MCF 10A (cell line): ENCODE measurements at regions of chr15 and their contacts with region 1.

Region 1: DNA sequence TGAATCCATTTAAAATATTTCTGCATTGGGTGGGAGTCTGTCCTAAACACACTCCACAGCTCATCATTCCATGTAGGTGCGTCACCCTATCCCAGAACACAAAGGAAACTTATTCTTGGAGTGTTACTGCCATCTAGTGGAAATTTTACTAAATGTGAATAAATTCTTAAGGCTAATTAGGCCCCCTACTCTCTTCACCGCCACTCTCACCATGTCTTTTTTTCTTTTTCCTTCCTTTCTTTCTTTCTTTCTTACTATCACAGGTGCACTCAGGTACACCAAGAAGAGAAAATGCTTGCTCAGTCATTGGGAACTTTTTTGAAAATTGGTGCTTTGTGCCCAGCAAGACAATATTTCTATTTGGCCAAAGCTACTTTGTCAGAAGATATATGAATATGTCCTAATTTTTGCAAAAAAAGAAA is 26.4 kb upstream of the ATP8B4 start:
- DNase-seq: peak; percentile 75
- H3K4me3 Mint-ChIP-seq: no peak overlapping the region
- H3K27ac Mint-ChIP-seq: no peak overlapping the region
- H3K4me1 Mint-ChIP-seq: peaks cover 12% of the 10 kb centered on the region
- H3K27me3 Mint-ChIP-seq: no peaks in the 10 kb centered on the region
- CTCF ChIP-seq: peak; percentile 49

Region 2: DNA sequence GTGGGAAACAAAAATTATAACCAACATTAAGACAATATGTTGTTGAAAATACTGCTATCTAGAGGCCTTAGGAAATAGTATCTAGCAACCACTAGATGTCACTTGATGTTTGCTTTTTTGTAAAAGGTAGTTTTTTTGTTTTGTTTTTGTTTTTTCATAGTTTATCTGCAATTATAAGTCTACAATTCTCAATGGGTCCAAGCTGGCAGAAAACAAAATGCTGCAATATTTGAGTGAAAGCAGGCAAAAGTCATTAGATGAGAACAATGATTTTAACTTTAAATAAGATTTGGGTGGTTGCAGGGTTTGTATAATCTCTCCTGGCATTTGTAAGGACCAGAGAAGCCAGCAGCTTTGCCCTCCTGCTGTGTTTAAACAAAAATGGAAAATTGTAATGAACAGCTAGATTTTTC is 1787.2 kb before region 1 on chr15:
- CTCF ChIA-PET with region 1: interaction called, 4 read pairs
- POLR2A ChIA-PET with region 1: no interaction called
- intact Hi-C with region 1: loop called (anchors 2 kb)
- DNase-seq: peak; percentile 34
- H3K4me3 Mint-ChIP-seq: no peak overlapping the region
- H3K27ac Mint-ChIP-seq: no peak overlapping the region
- H3K4me1 Mint-ChIP-seq: peaks cover 19% of the 10 kb centered on the region
- H3K27me3 Mint-ChIP-seq: no peaks in the 10 kb centered on the region
- CTCF ChIP-seq: peak; percentile 75

Region 3: DNA sequence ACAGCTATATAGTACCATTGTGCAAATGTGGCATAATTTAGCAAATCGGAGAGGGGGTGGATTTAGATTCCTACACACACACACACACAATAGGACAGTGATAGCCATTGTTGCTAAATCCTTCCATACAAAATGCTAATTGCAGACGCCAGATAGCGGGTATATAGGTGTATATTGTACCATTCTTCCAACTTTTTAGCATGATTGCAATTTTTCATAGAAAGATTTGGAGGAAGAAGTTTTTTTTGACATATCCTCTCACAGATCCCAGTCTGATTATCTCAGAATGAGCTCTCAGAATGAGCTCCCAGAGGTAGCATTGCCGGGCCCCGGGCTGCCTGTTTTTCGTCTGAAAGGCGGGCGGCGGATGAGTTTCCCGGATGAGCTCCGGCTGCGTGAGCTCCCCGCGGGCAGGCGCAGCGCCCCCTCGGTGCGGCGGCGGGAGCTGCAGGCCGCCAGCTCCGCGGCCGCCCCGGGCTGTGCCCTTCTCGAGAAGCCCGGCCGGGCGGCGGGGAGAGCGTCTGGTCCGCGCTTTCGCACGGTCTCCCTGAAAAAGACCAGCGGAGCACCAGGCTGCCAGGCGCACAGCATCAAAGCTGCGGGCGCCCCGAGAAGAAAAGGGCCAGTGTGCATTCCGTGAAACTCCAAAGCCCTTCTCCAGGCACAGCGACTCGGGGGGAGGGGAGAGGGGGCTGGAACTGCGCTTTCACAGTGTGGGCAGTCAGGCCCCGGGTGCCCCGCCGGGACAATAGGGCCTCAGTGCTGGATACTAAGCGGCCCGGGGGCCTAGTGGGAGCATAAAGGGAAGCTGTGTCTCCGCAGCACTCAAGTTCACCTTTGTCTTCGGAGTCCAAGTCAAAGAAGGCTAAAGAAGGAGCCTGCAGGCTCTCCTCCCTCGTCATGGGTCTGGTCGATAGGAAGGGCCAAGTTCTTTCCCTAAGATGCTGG is 1169.7 kb before region 1 on chr15:
- CTCF ChIA-PET with region 1: interaction called, 11 read pairs
- POLR2A ChIA-PET with region 1: no interaction called
- intact Hi-C with region 1: no loop called
- DNase-seq: peak; percentile 74
- H3K4me3 Mint-ChIP-seq: peak overlapping the region; percentile 45
- H3K27ac Mint-ChIP-seq: no peak overlapping the region
- H3K4me1 Mint-ChIP-seq: peaks cover 10% of the 10 kb centered on the region
- H3K27me3 Mint-ChIP-seq: no peaks in the 10 kb centered on the region
- CTCF ChIP-seq: peak; percentile 91

Region 4: GRCh38 chr15:49901996-49902684 is 243.3 kb before region 1 on chr15:
- CTCF ChIA-PET with region 1: interaction called, 5 read pairs
- POLR2A ChIA-PET with region 1: no interaction called
- intact Hi-C with region 1: loop called (anchors 2 kb)
- DNase-seq: peak; percentile 43
- H3K4me3 Mint-ChIP-seq: no peak overlapping the region
- H3K27ac Mint-ChIP-seq: peak overlapping the region; percentile 14
- H3K4me1 Mint-ChIP-seq: peaks cover 10% of the 10 kb centered on the region
- H3K27me3 Mint-ChIP-seq: no peaks in the 10 kb centered on the region
- CTCF ChIP-seq: peak; percentile 52

Region 5: DNA sequence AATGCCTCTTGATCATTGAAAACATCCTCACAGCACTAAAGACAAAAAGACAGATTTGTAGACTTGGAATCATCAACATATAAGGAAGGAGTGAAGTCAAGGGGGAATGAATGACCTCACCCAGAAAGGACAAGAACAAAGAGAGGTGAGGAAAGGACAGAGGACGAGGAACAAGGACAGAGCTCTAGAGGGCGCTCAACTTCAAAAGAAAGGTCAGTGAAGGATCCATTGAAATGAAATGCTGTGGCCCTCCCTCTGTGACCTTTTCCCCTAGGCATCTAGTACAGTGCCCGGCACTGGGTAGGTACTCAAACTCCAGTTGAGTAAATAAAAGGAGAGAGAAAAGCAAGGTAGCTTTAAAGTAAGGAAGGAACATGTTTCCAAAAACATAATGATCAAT is 29.0 kb before region 1 on chr15:
- CTCF ChIA-PET with region 1: interaction called, 5 read pairs
- POLR2A ChIA-PET with region 1: no interaction called
- intact Hi-C with region 1: loop called (anchors 1 kb)
- DNase-seq: peak; percentile 57
- H3K4me3 Mint-ChIP-seq: no peak overlapping the region
- H3K27ac Mint-ChIP-seq: no peak overlapping the region
- H3K4me1 Mint-ChIP-seq: no peaks in the 10 kb centered on the region
- H3K27me3 Mint-ChIP-seq: no peaks in the 10 kb centered on the region
- CTCF ChIP-seq: peak; percentile 16

Region 6: GRCh38 chr15:50302581-50302980 is 157.1 kb after region 1 on chr15:
- CTCF ChIA-PET with region 1: interaction called, 12 read pairs
- POLR2A ChIA-PET with region 1: interaction called, 4 read pairs
- intact Hi-C with region 1: no loop called
- DNase-seq: no peak
- H3K4me3 Mint-ChIP-seq: no peak overlapping the region
- H3K27ac Mint-ChIP-seq: no peak overlapping the region
- H3K4me1 Mint-ChIP-seq: no peaks in the 10 kb centered on the region
- H3K27me3 Mint-ChIP-seq: no peaks in the 10 kb centered on the region
- CTCF ChIP-seq: no peak

Region 7: GRCh38 chr15:50908210-50909009 is 762.9 kb after region 1 on chr15 and contains the start of gene AP4E1:
- CTCF ChIA-PET with region 1: interaction called, 5 read pairs
- POLR2A ChIA-PET with region 1: interaction called, 3 read pairs
- intact Hi-C with region 1: loop called (anchors 5 kb)
- DNase-seq: peak; percentile 91
- H3K4me3 Mint-ChIP-seq: peak within 1 kb of the TSS; percentile 81
- H3K27ac Mint-ChIP-seq: peak within 1 kb of the TSS; percentile 81
- H3K4me1 Mint-ChIP-seq: no peaks in the 10 kb centered on the region
- H3K27me3 Mint-ChIP-seq: no peaks in the 10 kb centered on the region
- CTCF ChIP-seq: peak; percentile 97
- total RNA-seq, gene AP4E1: 25.5 and 28.2 TPM in 2 replicates